GM23248 (cell line): ENCODE measurements at regions of chr16 and their contacts with region 1.

Region 1: GRCh38 chr16:84754353-84754856 is 54.6 kb downstream of the USP10 start:
- DNase-seq: peak; percentile 81
- H3K4me3 ChIP-seq: no peak overlapping the region; the same call in 1 of the 2 replicates
- H3K27ac ChIP-seq: no peak overlapping the region
- H3K4me1 ChIP-seq: peaks cover 25% of the 10 kb centered on the region
- H3K27me3 ChIP-seq: no peaks in the 10 kb centered on the region

Region 2: DNA sequence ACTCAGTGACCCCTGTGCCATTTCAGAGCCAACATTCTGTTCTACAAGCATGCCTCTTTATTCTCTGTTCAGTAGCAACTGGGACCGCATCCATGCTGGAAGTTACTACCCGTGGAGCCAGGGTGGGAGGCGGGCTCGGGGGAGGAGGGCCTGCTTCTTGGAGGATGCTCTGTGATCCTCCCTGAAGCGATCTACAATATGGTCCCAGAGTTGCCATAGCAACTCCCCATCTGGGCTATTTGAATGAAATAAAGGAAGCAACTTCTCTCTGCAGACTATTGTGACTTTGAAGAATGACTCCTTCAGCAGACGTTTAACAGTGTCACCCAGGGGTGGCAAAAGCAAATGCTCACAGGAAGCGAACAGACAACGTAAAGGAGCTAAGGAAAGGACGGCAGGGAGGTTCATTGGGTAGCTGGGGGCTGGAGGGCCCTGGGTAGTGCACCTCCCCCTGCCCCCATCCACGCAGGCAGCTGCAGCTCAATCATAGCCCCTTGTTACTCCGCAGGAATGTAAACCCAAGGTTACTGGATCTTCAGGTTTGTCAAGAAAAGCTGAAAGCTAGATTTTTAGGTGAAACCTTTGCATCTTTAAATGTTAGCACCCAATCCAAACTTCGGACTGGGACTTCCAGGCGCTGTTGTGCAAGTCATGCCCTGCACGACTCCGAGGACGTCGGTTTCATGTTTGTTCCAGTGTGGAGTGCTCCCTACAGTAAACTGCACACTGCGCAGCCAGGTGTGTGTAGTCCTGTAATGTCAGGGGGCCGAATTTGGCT is 198.8 kb before region 1 on chr16:
- in situ Hi-C with region 1: no loop called
- DNase-seq: no peak
- H3K4me3 ChIP-seq: no peak overlapping the region
- H3K27ac ChIP-seq: no peak overlapping the region
- H3K4me1 ChIP-seq: no peaks in the 10 kb centered on the region
- H3K27me3 ChIP-seq: no peaks in the 10 kb centered on the region

Region 3: GRCh38 chr16:84585886-84586285 is 168.5 kb before region 1 on chr16:
- in situ Hi-C with region 1: no loop called
- DNase-seq: no peak
- H3K4me3 ChIP-seq: no peak overlapping the region
- H3K27ac ChIP-seq: no peak overlapping the region
- H3K4me1 ChIP-seq: no peaks in the 10 kb centered on the region
- H3K27me3 ChIP-seq: no peaks in the 10 kb centered on the region

Region 4: DNA sequence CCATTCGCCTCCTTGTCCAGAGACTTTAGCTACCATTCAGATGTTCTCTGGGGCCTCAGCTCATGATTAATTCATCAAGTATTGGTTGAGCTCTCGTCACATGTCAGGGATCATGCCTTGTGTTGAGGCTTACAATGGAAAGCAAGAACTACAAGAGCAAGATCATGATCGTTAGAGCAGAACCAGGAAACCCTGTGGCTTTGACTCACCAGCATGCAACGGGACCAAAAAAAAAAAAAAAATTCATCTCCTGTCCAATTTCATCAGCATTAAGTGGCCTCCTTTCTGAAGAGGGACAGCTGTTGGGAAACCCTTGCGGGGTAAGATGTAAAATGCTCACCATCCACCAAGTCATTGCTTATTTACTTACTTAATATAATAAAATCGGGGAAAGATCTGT is 66.7 kb before region 1 on chr16:
- in situ Hi-C with region 1: no loop called
- DNase-seq: peak; percentile 95
- H3K4me3 ChIP-seq: no peak overlapping the region
- H3K27ac ChIP-seq: peak overlapping the region; percentile 70
- H3K4me1 ChIP-seq: peaks cover 38% of the 10 kb centered on the region
- H3K27me3 ChIP-seq: no peaks in the 10 kb centered on the region

Region 5: GRCh38 chr16:84967828-84968227 is 213.4 kb after region 1 on chr16:
- in situ Hi-C with region 1: loop called (anchors 10 kb)
- DNase-seq: no peak
- H3K4me3 ChIP-seq: no peak overlapping the region
- H3K27ac ChIP-seq: no peak overlapping the region
- H3K4me1 ChIP-seq: peaks cover 7% of the 10 kb centered on the region
- H3K27me3 ChIP-seq: no peaks in the 10 kb centered on the region

Region 6: DNA sequence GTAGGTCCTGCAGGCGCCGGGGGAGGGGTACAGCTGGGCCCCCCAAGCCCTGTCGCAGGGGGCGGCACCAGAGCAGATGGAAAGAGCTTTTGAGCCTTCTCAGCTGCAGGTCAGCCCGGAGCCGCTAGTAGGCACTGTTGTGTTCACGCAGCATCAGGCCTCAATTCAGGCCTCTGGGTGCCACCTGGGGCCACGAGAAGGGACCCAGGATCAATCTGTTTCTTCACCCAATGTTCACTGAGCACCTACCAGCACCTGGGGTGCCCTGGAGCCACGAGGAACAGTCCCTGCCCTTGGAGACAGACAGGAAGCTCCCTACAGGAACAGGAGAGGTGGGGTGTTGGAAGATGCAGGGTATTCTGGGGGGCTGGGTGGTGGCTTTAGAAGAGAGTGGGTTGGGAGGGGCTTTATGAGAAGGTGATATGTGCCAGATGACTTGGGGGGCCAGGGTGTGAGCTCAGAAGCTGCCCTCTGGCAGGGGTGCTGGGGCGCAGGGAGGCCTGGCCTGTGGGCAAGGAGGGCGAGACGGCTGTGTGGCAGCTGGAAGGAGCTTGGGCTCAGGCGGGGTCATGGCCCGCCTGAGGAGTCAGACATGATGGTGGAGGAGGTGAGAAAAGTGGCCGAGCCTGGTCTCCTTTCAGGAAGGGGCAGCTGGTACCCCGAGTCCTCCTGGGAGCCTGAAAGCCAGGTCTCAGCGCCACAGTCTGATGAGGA is 736.8 kb after region 1 on chr16:
- in situ Hi-C with region 1: no loop called
- DNase-seq: no peak
- H3K4me3 ChIP-seq: no peak overlapping the region
- H3K27ac ChIP-seq: no peak overlapping the region
- H3K4me1 ChIP-seq: no peaks in the 10 kb centered on the region; the same call in 1 of the 2 replicates
- H3K27me3 ChIP-seq: no peaks in the 10 kb centered on the region